SK-N-SH (cell line): ENCODE measurements at regions of chr14 and their contacts with region 1.

Region 1: GRCh38 chr14:55446218-55446654 is 5.8 kb upstream of the TBPL2 start:
- DNase-seq: peak; percentile 75
- H3K4me3 ChIP-seq: no peak overlapping the region
- H3K27ac ChIP-seq: peak overlapping the region; percentile 44 to 86; a peak in 3 of 4 replicates
- H3K4me1 ChIP-seq: peaks cover 0 to 20% of the 10 kb centered on the region in 2 experiments; a peak in 2 of 4 replicates
- H3K27me3 ChIP-seq: no peaks in the 10 kb centered on the region
- CTCF ChIP-seq: peak; percentile 85
- EP300 ChIP-seq: no peak
- RAD21 ChIP-seq: peak; percentile 85

Region 2: GRCh38 chr14:55416866-55417265 is 29.4 kb before region 1 on chr14:
- CTCF ChIA-PET with region 1: interaction called, 17 read pairs
- POLR2A ChIA-PET with region 1: no interaction called
- DNase-seq: no peak
- H3K4me3 ChIP-seq: no peak overlapping the region
- H3K27ac ChIP-seq: no peak overlapping the region
- H3K4me1 ChIP-seq: peaks cover 0 to 2% of the 10 kb centered on the region in 2 experiments; a peak in 2 of 4 replicates
- H3K27me3 ChIP-seq: no peaks in the 10 kb centered on the region; the same call in 1 of the 2 replicates
- CTCF ChIP-seq: peak; percentile 61
- EP300 ChIP-seq: no peak
- RAD21 ChIP-seq: peak; percentile 45

Region 3: DNA sequence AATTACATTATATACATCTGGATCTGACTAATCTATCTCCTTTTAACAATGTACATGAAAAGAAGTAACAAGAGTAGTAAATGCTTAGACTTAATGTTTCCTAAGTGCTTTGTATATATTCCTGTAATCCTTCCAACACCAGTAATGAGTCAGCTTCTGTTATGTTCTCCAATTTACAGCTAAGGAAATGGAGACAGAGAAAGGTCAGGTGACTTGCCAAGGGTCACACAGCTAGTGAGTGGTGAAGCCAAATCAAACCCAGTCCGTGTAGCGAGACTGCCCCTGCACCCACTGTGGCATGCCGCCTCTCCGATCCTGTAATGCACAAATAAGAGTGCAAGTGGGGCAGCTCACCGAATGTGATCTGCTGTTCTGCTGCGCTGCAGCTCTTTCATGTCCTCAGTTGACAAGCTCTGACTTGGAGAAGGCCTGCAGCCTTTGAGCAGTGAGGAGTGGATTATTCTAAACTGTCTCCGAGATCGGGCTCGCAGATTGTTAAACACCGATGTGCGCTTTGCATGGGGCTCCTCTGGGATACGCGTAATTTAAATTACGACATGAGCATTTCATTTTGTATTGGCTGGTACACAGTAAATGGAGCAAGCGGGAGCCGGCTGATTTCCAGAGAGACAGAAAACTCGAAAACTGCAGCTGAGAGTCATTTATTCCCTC is 68.7 kb after region 1 on chr14:
- CTCF ChIA-PET with region 1: no interaction called
- POLR2A ChIA-PET with region 1: no interaction called
- DNase-seq: no peak
- H3K4me3 ChIP-seq: no peak overlapping the region
- H3K27ac ChIP-seq: no peak overlapping the region
- H3K4me1 ChIP-seq: no peaks in the 10 kb centered on the region; a peak in 1 of 4 replicates
- H3K27me3 ChIP-seq: no peaks in the 10 kb centered on the region
- CTCF ChIP-seq: no peak
- EP300 ChIP-seq: no peak
- RAD21 ChIP-seq: no peak

Region 4: DNA sequence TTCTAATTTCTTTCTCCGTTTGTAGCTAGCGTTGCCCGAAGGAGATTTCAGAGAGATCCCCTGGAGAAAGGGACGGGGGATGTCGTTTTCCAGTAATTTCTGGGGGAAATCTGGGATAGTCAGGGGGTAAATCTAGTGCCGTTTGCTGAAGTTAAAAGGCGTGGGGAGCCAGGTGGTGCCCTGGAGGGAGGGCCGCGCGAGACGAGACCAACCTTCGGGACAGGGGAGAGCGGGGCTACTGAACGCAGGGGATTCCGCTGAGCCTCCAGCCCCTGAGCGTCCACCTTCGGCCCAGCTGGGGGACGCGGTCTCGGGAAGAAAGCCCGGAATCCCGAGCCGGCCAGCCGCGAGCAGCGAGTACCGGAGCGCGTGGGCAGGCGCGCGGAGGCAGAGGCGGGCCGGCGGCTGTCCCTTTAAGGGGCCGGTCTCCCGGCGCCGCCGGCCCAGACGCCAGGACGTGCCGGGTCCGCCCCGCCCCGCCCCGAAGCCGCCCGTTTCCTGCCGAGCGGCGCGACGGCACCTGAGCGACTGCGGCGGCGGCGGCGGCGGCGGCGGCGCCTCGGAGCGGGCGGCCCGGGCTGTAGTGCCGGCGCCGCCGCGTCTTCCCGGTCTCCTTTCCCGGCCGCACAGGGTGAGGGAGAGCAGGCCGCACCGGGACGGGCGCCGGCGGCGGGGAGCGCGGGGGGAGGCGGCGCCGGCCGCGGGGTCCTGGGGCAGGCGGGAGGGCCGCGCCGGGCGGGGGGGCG is 133.7 kb after region 1 on chr14 and contains the start of gene KTN1:
- CTCF ChIA-PET with region 1: interaction called, 11 read pairs
- POLR2A ChIA-PET with region 1: interaction called, 3 read pairs
- DNase-seq: peak; percentile 94
- H3K4me3 ChIP-seq: peak within 1 kb of the TSS; percentile 89 to 94
- H3K27ac ChIP-seq: peak within 1 kb of the TSS; percentile 79 to 87
- H3K4me1 ChIP-seq: peaks cover 21 to 35% of the 10 kb centered on the region in 2 experiments
- H3K27me3 ChIP-seq: no peaks in the 10 kb centered on the region
- CTCF ChIP-seq: no peak
- EP300 ChIP-seq: no peak; a peak in 1 of 4 replicates
- RAD21 ChIP-seq: no peak
- polyA plus RNA-seq, gene KTN1: 39.5 and 46.1 TPM in 2 replicates

Region 5: GRCh38 chr14:55585854-55586253 is 139.6 kb after region 1 on chr14:
- CTCF ChIA-PET with region 1: interaction called, 10 read pairs
- POLR2A ChIA-PET with region 1: interaction called, 3 read pairs
- DNase-seq: no peak
- H3K4me3 ChIP-seq: no peak overlapping the region
- H3K27ac ChIP-seq: peak overlapping the region in 1 of 2 experiments; percentile 78; a peak in 2 of 4 replicates
- H3K4me1 ChIP-seq: peaks cover 20 to 58% of the 10 kb centered on the region in 2 experiments
- H3K27me3 ChIP-seq: no peaks in the 10 kb centered on the region
- CTCF ChIP-seq: no peak
- EP300 ChIP-seq: no peak
- RAD21 ChIP-seq: no peak

Region 6: GRCh38 chr14:55593698-55594097 is 147.5 kb after region 1 on chr14:
- CTCF ChIA-PET with region 1: interaction called, 15 read pairs
- POLR2A ChIA-PET with region 1: no interaction called
- DNase-seq: no peak
- H3K4me3 ChIP-seq: no peak overlapping the region
- H3K27ac ChIP-seq: no peak overlapping the region; a peak in 1 of 4 replicates
- H3K4me1 ChIP-seq: peaks cover 3 to 11% of the 10 kb centered on the region in 2 experiments; a peak in 2 of 4 replicates
- H3K27me3 ChIP-seq: no peaks in the 10 kb centered on the region
- CTCF ChIP-seq: no peak
- EP300 ChIP-seq: no peak
- RAD21 ChIP-seq: no peak

Region 7: DNA sequence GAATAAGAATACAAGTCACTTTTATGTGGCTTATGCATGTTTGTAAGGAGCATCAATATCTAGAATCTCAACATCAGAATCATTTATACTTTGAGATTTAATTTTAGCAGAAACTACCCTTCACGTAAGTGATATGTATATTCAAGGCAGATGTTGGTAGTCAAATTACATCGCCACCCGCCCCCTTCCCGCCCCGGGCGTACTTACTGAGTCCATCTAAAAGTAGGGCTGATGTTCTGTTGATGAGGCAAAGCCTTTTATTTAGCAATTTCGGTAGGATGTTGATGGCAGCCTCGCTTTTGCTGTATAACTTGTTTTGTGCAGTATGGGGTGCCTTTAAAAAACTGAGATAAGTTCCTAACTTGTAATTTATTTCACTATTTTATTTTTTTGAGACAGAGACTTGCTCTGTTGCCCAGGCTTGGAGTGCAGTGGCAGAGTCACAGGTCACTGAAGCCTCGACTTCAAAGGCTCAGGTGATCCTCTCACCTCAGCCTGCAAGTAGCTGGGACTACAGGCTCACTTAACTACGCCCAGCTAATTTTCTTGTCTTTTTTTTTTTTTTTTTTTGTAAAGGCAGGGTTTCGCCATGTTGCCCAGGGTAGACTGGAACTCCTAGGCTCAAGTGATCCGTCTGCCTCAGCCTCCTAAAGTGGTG is 164.6 kb after region 1 on chr14:
- CTCF ChIA-PET with region 1: interaction called, 10 read pairs
- POLR2A ChIA-PET with region 1: no interaction called
- DNase-seq: no peak
- H3K4me3 ChIP-seq: no peak overlapping the region
- H3K27ac ChIP-seq: no peak overlapping the region
- H3K4me1 ChIP-seq: peaks cover 0 to 27% of the 10 kb centered on the region in 2 experiments; a peak in 2 of 4 replicates
- H3K27me3 ChIP-seq: no peaks in the 10 kb centered on the region
- CTCF ChIP-seq: no peak
- EP300 ChIP-seq: no peak
- RAD21 ChIP-seq: no peak

Region 8: DNA sequence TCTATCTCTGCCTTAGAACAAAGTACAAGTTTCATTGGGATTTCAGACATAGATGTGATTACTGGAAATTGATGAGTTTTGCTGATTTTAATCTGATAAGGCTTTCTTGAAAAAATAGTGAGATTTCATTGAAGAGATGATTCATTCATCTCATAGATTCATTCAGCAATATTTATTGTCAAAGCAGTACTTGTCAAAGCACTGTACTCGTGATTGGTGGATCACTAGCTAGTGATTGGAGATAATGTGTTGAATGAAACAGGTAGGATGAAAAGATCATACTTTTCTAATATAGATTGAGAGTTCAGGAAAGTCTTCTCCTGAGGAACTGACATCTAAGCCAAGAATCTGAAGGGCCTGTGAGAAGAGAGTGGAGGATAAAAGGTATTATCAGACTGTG is 204.8 kb after region 1 on chr14:
- CTCF ChIA-PET with region 1: interaction called, 14 read pairs
- POLR2A ChIA-PET with region 1: no interaction called
- DNase-seq: no peak
- H3K4me3 ChIP-seq: no peak overlapping the region
- H3K27ac ChIP-seq: no peak overlapping the region
- H3K4me1 ChIP-seq: no peaks in the 10 kb centered on the region
- H3K27me3 ChIP-seq: no peaks in the 10 kb centered on the region
- CTCF ChIP-seq: no peak
- EP300 ChIP-seq: no peak
- RAD21 ChIP-seq: no peak